Endothelial cell of umbilical vein (primary cell): ENCODE measurements at regions of chr5 and their contacts with region 1.

Region 1: DNA sequence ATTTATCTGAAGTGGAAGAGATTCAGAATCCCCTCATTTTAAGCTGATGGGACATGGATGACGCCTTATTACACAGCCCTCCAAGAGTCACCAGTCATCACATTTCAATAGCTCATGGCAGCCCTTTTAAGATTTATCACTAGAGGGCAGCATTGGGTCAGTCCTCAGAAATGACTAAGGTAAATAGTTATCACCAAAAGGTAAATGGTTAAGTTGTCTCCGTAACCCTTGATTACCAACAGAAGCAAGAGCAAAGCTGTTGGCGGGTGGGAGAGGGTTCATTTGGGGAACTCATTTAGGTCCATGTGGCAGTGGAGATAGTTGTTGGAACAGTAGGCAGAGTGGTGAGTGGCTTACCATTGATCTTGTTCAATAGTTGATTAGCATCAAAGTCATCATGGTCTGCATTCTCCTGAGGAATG is 12.0 kb upstream of the C9 start:
- DNase-seq: peak; percentile 72
- H3K4me3 ChIP-seq: no peak overlapping the region
- H3K27ac ChIP-seq: no peak overlapping the region
- H3K4me1 ChIP-seq: no peaks in the 10 kb centered on the region
- H3K27me3 ChIP-seq: no peaks in the 10 kb centered on the region
- CTCF ChIP-seq: peak; percentile 57 to 71
- POLR2A ChIP-seq: no peak

Region 2: GRCh38 chr5:39399135-39400036 is 23.1 kb after region 1 on chr5:
- CTCF ChIA-PET with region 1: interaction called, 14 read pairs
- POLR2A ChIA-PET with region 1: no interaction called
- dilution Hi-C with region 1: no loop called
- intact Hi-C with region 1: no loop called
- DNase-seq: peak; percentile 76
- H3K4me3 ChIP-seq: no peak overlapping the region
- H3K27ac ChIP-seq: peak overlapping the region; percentile 75
- H3K4me1 ChIP-seq: peaks cover 25% of the 10 kb centered on the region
- H3K27me3 ChIP-seq: no peaks in the 10 kb centered on the region
- CTCF ChIP-seq: no peak
- POLR2A ChIP-seq: no peak

Region 3: GRCh38 chr5:39475881-39476842 is 99.9 kb after region 1 on chr5:
- CTCF ChIA-PET with region 1: interaction called, 14 read pairs
- POLR2A ChIA-PET with region 1: no interaction called
- dilution Hi-C with region 1: no loop called
- intact Hi-C with region 1: no loop called
- DNase-seq: peak; percentile 81
- H3K4me3 ChIP-seq: no peak overlapping the region
- H3K27ac ChIP-seq: no peak overlapping the region
- H3K4me1 ChIP-seq: peaks cover 9% of the 10 kb centered on the region
- H3K27me3 ChIP-seq: no peaks in the 10 kb centered on the region
- CTCF ChIP-seq: no peak
- POLR2A ChIP-seq: no peak

Region 4: DNA sequence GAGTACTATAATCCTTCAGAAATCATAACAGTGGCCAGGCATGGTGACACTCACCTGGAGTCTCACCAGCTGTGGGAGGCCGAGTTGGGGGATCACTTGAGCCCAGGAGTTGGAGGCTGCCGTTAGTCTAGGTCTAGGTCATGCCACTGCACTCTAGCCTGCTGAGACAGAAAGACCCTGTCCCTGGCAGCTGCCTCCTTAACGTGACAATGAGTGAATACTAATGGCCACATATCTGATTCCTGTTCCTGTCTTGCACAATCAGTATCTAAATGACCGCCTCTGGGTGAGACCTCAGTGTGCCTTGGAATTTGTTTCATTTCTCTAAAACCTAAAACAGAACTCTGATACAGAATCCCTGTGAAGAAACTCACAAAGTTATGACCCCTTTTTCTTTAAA is 179.5 kb after region 1 on chr5:
- CTCF ChIA-PET with region 1: interaction called, 12 read pairs
- POLR2A ChIA-PET with region 1: no interaction called
- dilution Hi-C with region 1: no loop called
- intact Hi-C with region 1: no loop called
- DNase-seq: no peak
- H3K4me3 ChIP-seq: no peak overlapping the region
- H3K27ac ChIP-seq: no peak overlapping the region
- H3K4me1 ChIP-seq: no peaks in the 10 kb centered on the region
- H3K27me3 ChIP-seq: no peaks in the 10 kb centered on the region
- CTCF ChIP-seq: no peak
- POLR2A ChIP-seq: no peak

Region 5: GRCh38 chr5:39578887-39579497 is 202.7 kb after region 1 on chr5:
- CTCF ChIA-PET with region 1: interaction called, 153 read pairs
- POLR2A ChIA-PET with region 1: no interaction called
- dilution Hi-C with region 1: no loop called
- intact Hi-C with region 1: no loop called
- DNase-seq: peak; percentile 38
- H3K4me3 ChIP-seq: no peak overlapping the region
- H3K27ac ChIP-seq: no peak overlapping the region
- H3K4me1 ChIP-seq: peaks cover 4% of the 10 kb centered on the region
- H3K27me3 ChIP-seq: no peaks in the 10 kb centered on the region
- CTCF ChIP-seq: peak; percentile 18
- POLR2A ChIP-seq: no peak